Dendritic cell treated with granulocyte-macrophage colony-stimulating factor and Interleukin-4, amounts not matched to agents 40 ng/mL and 50 ng/mL, for 4 days (primary cell): ENCODE measurements at regions of chr3 and their contacts with region 1.

Region 1: GRCh38 chr3:87227104-87227834 is at the start of gene CHMP2B:
- H3K4me3 Mint-ChIP-seq: peak within 1 kb of the TSS; percentile 97
- H3K27ac Mint-ChIP-seq: peak within 1 kb of the TSS; percentile 99
- H3K4me1 Mint-ChIP-seq: peaks cover 32% of the 10 kb centered on the region
- H3K27me3 Mint-ChIP-seq: peaks cover 4% of the 10 kb centered on the region

Region 2: GRCh38 chr3:87006844-87007439 is 220.3 kb before region 1 on chr3:
- intact Hi-C with region 1: no loop called
- H3K4me3 Mint-ChIP-seq: no peak overlapping the region
- H3K27ac Mint-ChIP-seq: no peak overlapping the region
- H3K4me1 Mint-ChIP-seq: no peaks in the 10 kb centered on the region
- H3K27me3 Mint-ChIP-seq: no peaks in the 10 kb centered on the region

Region 3: GRCh38 chr3:87088993-87089841 is 138.1 kb before region 1 on chr3:
- intact Hi-C with region 1: loop called (anchors 2 kb)
- H3K4me3 Mint-ChIP-seq: peak overlapping the region; percentile 94
- H3K27ac Mint-ChIP-seq: peak overlapping the region; percentile 97
- H3K4me1 Mint-ChIP-seq: peaks cover 18% of the 10 kb centered on the region
- H3K27me3 Mint-ChIP-seq: no peaks in the 10 kb centered on the region

Region 4: DNA sequence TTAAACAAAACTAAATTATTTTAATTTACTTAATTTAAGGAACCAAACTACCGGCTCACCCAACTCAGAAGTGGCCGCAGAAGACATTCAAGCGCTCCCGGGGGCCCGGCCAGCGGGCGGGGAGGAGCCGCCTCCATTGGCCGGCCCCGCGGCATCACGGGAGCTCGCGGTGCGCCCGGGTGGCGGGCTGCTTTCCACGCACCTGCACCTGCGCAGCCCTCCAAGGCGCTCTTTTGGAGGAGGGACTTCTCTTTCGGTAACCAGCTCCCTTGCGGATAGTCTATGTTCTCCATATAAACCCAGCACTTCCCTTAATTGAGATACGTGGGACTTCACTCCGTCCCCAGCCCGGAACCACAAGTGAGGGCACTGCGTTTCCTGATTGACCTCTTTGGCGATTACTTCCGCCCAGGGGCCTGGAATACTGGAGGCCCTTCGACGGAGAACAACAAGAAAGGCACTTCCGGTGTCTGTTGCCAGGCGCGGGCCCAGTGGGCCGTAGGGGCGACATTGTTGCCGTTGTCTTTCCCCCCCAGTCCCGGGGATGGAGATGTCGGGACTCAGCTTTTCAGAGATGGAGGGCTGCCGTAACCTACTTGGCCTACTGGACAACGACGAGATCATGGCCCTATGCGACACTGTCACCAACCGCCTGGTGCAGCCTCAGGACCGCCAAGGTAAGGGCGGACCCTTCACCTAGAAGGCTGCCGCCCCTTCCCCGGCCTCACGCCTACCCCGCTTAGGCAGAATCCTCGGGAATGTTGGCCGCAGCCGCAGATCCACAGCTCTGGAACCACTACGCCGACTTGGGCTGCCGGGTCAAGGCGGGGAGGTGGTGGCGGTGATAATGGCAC is 922.5 kb after region 1 on chr3 and contains the start of gene C3orf38:
- intact Hi-C with region 1: loop called (anchors 5 kb)
- H3K4me3 Mint-ChIP-seq: peak within 1 kb of the TSS; percentile 95
- H3K27ac Mint-ChIP-seq: peak within 1 kb of the TSS; percentile 98
- H3K4me1 Mint-ChIP-seq: peaks cover 32% of the 10 kb centered on the region
- H3K27me3 Mint-ChIP-seq: no peaks in the 10 kb centered on the region